Esophagus squamous epithelium (tissue), 5 donors: ENCODE measurements at regions of chr6 and their contacts with region 1.

Region 1: DNA sequence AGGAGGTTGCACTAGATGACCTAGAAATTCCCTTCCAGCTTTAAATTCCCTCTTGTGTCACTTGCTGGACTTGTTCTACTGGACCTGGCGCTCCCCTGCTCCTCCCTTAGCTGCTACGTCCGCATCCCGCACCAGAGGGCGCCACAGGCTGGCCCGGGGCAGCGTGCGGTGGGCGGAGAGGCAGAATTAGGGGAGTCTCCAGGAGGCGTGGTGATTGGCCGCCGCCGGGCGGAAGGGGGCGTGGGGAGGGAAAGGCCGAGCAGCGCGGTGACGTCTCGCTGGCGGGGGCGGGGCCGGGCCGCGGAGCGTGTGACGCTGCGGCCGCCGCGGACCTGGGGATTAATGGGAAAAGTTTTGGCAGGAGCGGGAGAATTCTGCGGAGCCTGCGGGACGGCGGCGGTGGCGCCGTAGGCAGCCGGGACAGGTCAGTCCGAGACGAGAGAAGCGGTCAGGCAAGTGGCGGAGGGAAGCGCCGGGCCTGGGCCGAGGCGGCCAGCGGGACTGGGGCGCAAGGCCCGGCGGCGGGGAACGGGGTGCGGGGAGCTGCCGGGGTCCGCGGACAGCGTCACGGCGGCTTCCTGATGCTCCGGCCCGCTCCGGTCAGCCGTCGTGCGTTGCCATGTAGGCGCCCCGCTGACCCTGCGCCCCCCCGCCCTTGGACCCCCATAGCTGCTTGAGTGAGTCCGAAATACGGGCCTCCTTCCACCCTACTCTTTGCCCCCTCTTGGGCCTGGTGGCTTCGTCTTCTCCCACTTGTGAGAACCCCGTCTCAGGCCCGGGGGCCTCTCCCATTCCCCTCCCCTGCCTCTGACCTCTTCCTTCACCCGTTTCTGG is at the start of gene PPARD:
- DNase-seq: peak; percentile 91
- H3K4me3 ChIP-seq: peak within 1 kb of the TSS; percentile 69 to 99 (median 92)
- H3K27ac ChIP-seq: peak within 1 kb of the TSS; percentile 89 to 97 (median 96)
- H3K4me1 ChIP-seq: peaks cover 17 to 46% (median 32%) of the 10 kb centered on the region in 3 donors
- H3K27me3 ChIP-seq: no peaks in the 10 kb centered on the region
- CTCF ChIP-seq: peak; percentile 93 to 100 (median 100)
- POLR2A ChIP-seq: peak in 3 of 4 donors; percentile 67 to 86 (median 71)
- total RNA-seq, gene PPARD: 17.0 to 42.8 (median 28.2) TPM

Region 2: DNA sequence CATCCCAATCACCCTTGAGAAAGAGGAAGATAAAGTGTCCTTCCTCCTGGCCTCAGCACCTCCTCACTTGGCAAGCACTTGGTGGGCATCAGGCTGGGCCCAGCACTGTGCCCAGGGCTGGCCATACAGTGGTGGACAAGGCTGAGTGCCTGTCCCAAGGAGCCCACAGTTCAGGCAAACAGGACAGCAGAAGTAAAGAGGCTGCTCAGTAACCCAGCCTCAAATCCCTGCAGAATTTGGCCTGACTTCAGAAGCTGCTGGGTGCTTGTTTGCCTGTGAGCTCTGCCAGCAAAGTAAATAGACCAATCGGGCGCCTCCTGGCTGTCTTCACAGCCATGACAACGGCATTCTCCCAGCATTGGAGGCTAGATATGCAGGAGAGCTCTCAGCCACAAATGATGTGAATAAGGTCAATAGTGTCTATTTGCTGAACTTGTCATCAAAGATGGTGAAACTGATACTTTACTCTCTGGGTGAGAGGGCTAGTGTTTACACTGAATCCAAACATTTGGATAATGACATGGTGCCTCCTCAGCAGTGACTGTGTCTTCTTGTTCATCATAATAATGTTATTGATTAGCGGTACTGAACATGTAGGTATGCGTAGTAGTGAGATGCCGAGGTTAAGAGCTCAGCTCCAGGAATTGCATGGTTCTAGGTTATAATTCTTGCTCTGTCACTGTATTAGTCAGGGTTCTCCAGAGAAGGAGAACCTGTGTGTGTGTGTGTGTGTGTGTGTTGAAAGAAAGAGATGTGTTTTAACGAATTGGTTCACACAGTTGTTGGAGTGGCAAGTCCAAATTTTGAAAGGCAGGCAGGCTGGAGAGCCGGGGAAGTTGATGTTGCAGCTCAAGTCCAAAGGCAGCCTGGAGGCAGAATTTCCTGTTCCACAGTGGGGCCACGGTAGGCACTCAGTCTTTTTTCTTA is 72.9 kb after region 1 on chr6:
- intact Hi-C with region 1: loop called (anchors 10 kb)
- DNase-seq: no peak
- H3K4me3 ChIP-seq: no peak overlapping the region
- H3K27ac ChIP-seq: no peak overlapping the region
- H3K4me1 ChIP-seq: peaks cover 4 to 44% (median 8%) of the 10 kb centered on the region in 3 donors
- H3K27me3 ChIP-seq: no peaks in the 10 kb centered on the region
- CTCF ChIP-seq: peak in 5 of 6 experiments; percentile 51 to 87 (median 70)
- POLR2A ChIP-seq: no peak

Region 3: DNA sequence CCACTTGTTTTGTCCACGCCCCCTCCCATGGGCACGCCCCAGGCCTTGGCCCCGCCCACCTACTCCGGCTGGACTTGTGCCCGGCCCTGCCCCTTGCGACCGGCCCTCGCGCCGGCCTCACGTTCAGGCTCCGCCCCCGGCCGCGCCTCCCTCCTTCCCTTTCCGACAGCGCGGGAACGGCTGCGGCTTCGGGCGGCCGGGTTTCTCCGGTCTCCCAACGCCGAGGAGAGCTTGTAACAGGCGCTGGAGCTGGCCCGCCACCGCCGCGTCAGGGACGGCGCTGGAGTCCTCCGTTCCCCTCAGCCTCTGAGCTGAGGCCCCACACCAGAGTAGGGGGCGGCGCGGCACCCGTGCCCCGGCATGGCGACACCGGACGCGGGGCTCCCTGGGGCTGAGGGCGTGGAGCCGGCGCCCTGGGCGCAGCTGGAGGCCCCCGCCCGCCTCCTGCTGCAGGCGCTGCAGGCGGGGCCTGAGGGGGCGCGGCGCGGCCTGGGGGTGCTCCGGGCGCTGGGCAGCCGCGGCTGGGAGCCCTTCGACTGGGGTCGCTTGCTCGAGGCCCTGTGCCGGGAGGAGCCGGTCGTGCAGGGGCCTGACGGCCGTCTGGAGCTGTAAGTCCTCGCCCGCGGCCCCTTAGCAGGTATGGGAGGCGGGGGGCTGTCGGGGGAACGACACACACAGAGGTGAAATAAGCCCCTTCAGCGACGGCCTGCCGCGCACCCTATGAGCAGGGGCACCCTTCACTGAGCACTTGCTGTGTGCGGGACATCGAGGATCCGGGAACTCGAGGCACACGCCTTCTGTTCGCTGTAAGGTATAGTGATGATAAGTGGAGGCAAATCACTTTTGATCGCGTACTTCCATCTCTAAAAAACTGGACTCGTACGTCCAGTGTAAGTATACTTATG is 110.0 kb after region 1 on chr6 and contains the start of gene FANCE:
- intact Hi-C with region 1: loop called (anchors 5 kb)
- DNase-seq: peak; percentile 71
- H3K4me3 ChIP-seq: peak within 1 kb of the TSS; percentile 45 to 85 (median 70)
- H3K27ac ChIP-seq: peak within 1 kb of the TSS; percentile 75 to 88 (median 82)
- H3K4me1 ChIP-seq: peaks cover 24 to 58% (median 26%) of the 10 kb centered on the region in 3 donors
- H3K27me3 ChIP-seq: no peaks in the 10 kb centered on the region
- CTCF ChIP-seq: peak in 2 of 6 experiments; percentile 12 to 13
- POLR2A ChIP-seq: peak in 2 of 4 donors; percentile 19 to 79
- total RNA-seq, gene FANCE: 6.9 to 15.5 (median 8.0) TPM